Common myeloid progenitor, CD34-positive (primary cell): ENCODE measurements at regions of chr7 and their contacts with region 1.

Region 1: DNA sequence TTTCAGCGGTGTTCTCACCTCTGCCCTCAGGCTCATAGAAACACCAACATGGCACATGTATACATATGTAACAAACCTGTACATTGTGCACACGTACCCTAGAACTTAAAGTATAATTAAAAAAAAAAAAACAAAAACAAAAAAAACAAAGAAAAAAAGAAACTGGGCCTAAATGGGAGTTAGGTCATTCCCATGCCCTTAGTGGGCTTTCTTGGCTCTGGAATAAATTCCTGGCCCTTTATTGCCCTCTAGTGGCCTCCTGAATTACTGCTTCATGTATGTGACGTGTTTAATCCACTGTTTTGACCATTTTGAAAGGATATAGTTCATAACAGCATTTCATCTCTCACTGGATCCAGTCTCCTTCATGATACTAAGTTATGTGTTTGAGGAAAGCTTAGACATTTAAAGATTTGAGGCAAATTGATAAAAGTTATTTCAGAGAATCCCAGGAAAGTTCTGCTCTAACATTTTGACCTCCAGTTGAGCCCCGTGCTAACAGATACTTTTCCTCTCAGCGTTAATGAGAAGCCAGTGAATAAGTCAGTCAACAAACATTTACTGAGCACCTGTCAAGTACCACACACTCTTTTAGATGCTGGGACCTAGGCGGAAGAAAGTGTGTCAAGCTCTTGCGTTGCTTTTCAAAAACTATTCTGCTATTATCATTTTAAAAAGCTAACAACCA is 54.7 kb upstream of the SYPL1 start:
- DNase-seq: peak; percentile 73 to 81 (median 76)
- H3K4me3 ChIP-seq: no peak overlapping the region
- H3K27ac ChIP-seq: no peak overlapping the region
- H3K4me1 ChIP-seq: no peaks in the 10 kb centered on the region
- H3K27me3 ChIP-seq: no peaks in the 10 kb centered on the region

Region 2: GRCh38 chr7:106056513-106057203 is 110.1 kb before region 1 on chr7:
- CTCF ChIA-PET with region 1: interaction called, 24 read pairs
- POLR2A ChIA-PET with region 1: no interaction called
- DNase-seq: peak; percentile 72 to 85 (median 83)
- H3K4me3 ChIP-seq: no peak overlapping the region
- H3K27ac ChIP-seq: no peak overlapping the region
- H3K4me1 ChIP-seq: peaks cover 7 to 42% (median 27%) of the 10 kb centered on the region in 4 experiments
- H3K27me3 ChIP-seq: no peaks in the 10 kb centered on the region

Region 3: GRCh38 chr7:106126170-106126938 is 40.4 kb before region 1 on chr7:
- CTCF ChIA-PET with region 1: no interaction called
- POLR2A ChIA-PET with region 1: no interaction called
- DNase-seq: peak; percentile 56 to 89 (median 81)
- H3K4me3 ChIP-seq: peak overlapping the region in 1 of 7 experiments; percentile 37
- H3K27ac ChIP-seq: no peak overlapping the region
- H3K4me1 ChIP-seq: peaks cover 3 to 20% (median 11%) of the 10 kb centered on the region in 4 experiments
- H3K27me3 ChIP-seq: no peaks in the 10 kb centered on the region